ENCODE measurements at regions of chr2 and their contacts with region 1.

Region 1: DNA sequence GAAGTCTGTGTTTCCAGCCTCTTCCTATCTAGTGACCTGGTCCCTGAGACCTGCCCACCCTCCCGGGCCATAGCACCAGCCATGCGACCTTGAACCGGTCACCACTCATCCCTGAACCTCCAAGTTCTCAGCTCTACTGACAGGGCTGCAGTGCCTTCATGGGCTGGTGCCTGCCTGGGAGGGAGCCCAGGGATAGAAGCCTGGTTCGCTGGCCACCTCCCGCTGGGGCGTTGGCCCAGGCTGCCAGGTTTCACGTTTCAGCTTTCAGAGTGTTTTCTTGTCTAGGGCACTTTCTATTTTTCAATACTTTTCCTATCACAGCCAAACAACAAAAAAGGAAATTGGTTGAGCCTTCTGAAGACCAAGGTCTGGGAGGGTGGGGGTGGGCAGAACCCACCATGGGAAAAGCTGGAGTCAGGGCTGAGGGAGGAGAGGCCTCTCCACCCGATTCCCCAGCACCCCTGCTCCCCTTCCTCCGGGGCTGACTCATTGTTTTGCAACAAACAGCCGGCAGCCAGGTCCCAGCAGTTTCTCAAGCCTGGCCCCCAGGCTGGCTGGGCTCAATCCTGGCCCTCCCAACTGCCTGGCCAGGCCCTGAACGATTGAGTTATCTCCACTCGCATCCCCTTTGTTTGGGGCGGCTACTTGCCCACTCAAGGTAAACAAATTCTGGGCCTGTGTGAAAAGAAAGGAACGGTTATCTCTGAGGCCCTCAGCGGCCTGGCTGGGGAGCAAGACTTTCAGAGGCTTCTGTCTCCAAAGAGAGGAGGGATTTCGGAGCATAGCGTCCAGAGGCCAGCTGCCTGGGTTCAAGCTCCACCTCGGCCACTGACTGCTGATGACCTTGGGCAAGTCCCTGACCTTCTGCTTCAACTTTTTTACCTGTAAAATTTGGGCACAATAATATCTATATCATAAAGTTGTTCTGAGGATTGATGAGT is 47.5 kb downstream of the ZFP36L2 start:
- DNase-seq: peak; percentile 63 to 70
- H3K4me3 ChIP-seq: peak overlapping the region in 2 of 4 experiments; percentile 19 to 35; a peak in 4 of 8 replicates
- H3K27ac ChIP-seq: peak overlapping the region; percentile 80
- H3K4me1 ChIP-seq: peaks cover 13 to 32% (median 27%) of the 10 kb centered on the region in 4 experiments
- H3K27me3 ChIP-seq: no peaks in the 10 kb centered on the region
- CTCF ChIP-seq: no peak
- EP300 ChIP-seq: no peak
- POLR2A ChIP-seq: peak in 1 of 2 experiments; percentile 65; a peak in 1 of 3 replicates
- RAD21 ChIP-seq: no peak

Region 2: GRCh38 chr2:43210467-43211303 is 31.8 kb after region 1 on chr2:
- CTCF ChIA-PET with region 1: interaction called, 18 read pairs
- POLR2A ChIA-PET with region 1: interaction called, 6 read pairs
- DNase-seq: no peak
- H3K4me3 ChIP-seq: no peak overlapping the region
- H3K27ac ChIP-seq: no peak overlapping the region
- H3K4me1 ChIP-seq: peaks cover 0 to 12% (median 6%) of the 10 kb centered on the region in 4 experiments; a peak in 5 of 7 replicates
- H3K27me3 ChIP-seq: no peaks in the 10 kb centered on the region
- CTCF ChIP-seq: no peak
- EP300 ChIP-seq: no peak
- POLR2A ChIP-seq: no peak
- RAD21 ChIP-seq: no peak

Region 3: DNA sequence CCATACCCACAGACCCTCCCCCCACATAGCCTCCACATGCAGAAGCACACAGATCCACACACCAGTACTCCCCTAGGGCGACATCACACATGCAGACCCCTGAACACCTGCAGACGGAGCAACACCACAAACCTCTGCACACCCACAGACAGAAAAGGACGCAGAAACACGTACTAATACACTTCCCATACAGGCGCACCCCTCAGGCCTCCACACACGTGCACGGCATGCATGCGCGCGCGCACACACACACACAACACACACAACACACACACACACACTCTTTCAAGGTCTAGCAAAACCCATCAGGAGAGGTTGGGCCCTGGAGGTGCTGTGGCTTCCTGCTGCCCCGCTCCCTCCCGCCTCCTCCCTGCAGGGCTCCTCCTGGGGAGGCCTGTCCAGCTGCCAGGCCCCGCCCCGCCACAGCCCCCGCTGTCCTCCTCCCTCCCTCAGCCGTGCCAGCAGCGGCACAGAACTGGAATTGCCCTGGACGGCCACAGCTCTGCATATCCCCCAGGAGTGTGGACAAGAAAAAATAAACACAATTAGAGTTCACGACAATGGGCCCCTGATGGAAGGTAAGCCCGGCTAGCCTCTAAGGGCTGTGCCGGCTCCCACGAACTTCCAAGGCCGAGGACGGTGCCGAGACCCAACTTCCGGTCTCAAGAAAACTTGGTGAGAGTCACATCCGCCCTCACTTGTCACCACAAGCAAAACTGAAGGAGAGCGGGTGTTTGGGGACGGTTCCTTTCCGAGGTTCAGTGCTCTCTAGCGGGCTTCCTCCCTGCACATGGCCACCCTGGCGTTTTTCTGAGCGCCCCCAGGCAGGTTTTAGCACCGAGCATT is 40.7 kb after region 1 on chr2:
- CTCF ChIA-PET with region 1: interaction called, 18 read pairs
- POLR2A ChIA-PET with region 1: interaction called, 52 read pairs
- DNase-seq: peak in 1 of 2 experiments; percentile 76
- H3K4me3 ChIP-seq: peak overlapping the region; percentile 14 to 83 (median 34); a peak in 7 of 8 replicates
- H3K27ac ChIP-seq: peak overlapping the region; percentile 65; the same call in 1 of the 2 replicates
- H3K4me1 ChIP-seq: peaks cover 20 to 43% (median 25%) of the 10 kb centered on the region in 4 experiments
- H3K27me3 ChIP-seq: no peaks in the 10 kb centered on the region
- CTCF ChIP-seq: no peak
- EP300 ChIP-seq: no peak
- POLR2A ChIP-seq: no peak
- RAD21 ChIP-seq: no peak

Measured in H1 (cell line).